PC-9 (cell line): ENCODE measurements at regions of chr11 and their contacts with region 1.

Region 1: DNA sequence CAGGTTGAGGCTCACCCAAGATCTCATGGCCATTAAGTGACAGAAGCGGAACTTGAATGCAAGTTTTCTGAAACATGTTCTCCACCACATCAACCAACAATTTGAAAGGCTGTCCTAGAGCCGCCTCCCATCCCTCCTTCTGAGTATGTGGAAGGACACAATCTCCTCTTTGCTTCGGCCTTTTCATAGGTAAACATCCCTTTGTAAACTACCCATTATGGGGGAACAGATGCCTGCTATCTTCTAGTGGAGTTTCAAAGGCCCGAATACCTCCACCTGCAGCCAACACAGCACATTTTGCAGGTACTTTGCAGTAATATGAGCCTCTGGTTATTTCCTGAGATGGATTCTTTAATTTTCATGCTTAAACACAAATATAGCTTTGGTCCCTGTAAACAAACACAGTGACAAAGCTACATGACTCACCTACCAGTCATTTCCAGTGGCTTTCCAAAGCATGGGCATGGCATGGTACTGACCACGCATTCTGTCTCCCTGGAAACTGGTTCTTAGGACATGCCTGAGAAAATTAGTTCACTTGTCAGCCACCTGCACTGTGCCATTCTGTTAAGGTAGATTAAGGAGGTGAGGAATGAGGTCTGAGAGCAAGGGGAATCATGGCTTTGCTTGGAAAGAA is 60.1 kb downstream of the EHF start:
- DNase-seq: peak; percentile 85 to 99
- H3K4me3 ChIP-seq: no peak overlapping the region
- H3K27ac ChIP-seq: peak overlapping the region; percentile 86
- H3K4me1 ChIP-seq: peaks cover 60% of the 10 kb centered on the region
- H3K27me3 ChIP-seq: no peaks in the 10 kb centered on the region
- CTCF ChIP-seq: no peak

Region 2: DNA sequence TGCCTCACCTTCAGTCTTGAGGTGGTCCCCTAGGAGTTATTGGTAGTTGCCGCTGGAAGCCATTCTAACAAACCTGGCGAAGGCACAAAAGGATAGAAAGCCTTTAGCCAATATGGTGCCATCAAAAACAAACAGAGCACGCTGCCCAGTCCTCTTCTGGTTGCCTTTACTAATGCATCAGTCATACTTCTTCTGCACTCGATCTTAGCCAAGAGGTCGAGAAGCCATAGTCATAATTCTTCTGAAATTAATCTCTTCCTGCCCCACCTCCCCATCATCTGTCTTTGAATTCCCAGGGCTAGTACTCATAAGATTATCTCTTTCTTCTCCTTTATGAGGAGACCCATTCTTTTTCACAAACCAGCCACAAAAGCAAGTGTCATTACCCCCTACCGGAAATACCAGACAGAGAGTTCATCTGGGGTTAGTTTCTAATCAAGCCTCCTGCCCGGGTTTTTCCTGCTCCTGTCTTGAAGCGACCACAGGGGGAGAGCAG is 81.6 kb before region 1 on chr11:
- CTCF ChIA-PET with region 1: no interaction called
- POLR2A ChIA-PET with region 1: no interaction called
- intact Hi-C with region 1: loop called (anchors 1 kb)
- DNase-seq: peak; percentile 66 to 98
- H3K4me3 ChIP-seq: peak overlapping the region; percentile 24; the same call in 1 of the 2 replicates
- H3K27ac ChIP-seq: peak overlapping the region; percentile 91
- H3K4me1 ChIP-seq: peaks cover 45% of the 10 kb centered on the region
- H3K27me3 ChIP-seq: no peaks in the 10 kb centered on the region
- CTCF ChIP-seq: no peak

Region 3: DNA sequence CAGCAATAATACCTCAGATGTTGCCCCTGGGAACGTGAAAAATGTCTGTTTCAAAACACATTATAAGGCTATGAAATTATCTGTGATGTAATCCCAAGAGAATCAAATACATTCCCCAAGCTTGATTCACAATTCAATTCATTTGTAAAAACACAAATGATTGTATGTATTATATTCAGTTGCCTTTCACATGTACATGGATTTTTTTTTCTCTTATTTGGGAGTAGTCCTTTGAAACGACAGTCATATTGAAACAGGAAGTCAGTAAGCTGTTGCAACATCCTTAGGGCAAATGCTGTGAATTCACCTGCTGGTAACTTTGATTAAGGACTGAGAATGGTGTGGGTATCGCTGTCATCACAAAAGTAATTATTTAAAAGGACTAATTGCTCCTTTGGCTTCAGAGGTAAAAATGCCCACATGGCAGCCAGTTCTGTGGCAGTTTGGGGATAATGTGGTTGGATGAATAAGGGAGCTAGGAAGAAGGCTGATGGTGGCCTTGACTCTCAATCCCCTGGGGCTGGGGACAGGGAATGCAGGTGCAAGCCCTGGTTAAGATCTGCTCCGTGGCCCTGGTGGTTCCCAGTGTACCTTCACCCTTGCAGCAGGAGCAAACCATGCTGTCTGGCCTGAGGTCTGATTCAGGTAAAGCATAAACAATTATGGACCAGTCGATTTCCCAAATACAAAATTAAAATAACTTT is 46.9 kb before region 1 on chr11:
- CTCF ChIA-PET with region 1: no interaction called
- POLR2A ChIA-PET with region 1: no interaction called
- intact Hi-C with region 1: loop called (anchors 2 kb)
- DNase-seq: peak in 1 of 2 experiments; percentile 90
- H3K4me3 ChIP-seq: peak overlapping the region; percentile 45
- H3K27ac ChIP-seq: peak overlapping the region; percentile 91
- H3K4me1 ChIP-seq: peaks cover 100% of the 10 kb centered on the region
- H3K27me3 ChIP-seq: no peaks in the 10 kb centered on the region
- CTCF ChIP-seq: peak; percentile 41; the same call in 1 of the 2 replicates

Region 4: DNA sequence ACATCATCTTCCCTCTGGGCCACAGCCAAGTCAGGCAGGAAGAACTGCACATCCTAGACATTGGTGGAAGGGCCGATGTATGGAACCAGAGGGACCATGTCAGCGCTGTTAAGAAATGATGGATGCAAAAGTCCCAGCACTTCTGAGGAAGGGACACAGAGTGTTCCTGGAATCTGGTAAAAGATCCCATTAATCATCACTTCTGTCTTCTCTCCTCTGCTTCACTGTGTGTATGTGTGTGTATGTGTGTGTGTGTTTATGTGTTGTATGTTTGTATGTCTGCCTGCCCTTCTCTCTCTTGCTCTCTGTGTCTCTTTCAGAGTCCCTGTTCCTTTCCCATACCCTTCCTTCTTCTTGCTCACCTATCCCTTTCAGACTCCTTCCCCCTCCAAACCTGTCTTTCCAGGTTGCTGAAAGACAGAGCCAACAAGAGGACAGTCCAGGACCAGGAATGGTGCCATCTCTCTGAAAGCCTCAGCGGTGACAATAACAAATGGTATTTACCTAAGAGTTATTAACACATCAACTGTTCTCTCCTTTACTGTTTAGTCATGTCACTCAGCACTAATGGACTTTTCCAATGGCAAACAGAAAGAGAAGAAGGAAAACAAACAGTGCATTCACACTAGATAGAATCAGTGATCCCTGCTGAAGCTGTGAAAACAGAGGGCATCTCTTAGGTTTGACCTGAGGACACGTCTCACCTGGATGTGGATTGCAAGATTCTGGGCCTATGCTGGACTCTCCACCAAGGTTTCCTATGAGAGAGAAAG is 13.0 kb before region 1 on chr11:
- CTCF ChIA-PET with region 1: no interaction called
- POLR2A ChIA-PET with region 1: no interaction called
- intact Hi-C with region 1: loop called (anchors 1 kb)
- DNase-seq: peak; percentile 78 to 99
- H3K4me3 ChIP-seq: no peak overlapping the region
- H3K27ac ChIP-seq: peak overlapping the region; percentile 85
- H3K4me1 ChIP-seq: peaks cover 50% of the 10 kb centered on the region
- H3K27me3 ChIP-seq: no peaks in the 10 kb centered on the region
- CTCF ChIP-seq: no peak

Region 5: DNA sequence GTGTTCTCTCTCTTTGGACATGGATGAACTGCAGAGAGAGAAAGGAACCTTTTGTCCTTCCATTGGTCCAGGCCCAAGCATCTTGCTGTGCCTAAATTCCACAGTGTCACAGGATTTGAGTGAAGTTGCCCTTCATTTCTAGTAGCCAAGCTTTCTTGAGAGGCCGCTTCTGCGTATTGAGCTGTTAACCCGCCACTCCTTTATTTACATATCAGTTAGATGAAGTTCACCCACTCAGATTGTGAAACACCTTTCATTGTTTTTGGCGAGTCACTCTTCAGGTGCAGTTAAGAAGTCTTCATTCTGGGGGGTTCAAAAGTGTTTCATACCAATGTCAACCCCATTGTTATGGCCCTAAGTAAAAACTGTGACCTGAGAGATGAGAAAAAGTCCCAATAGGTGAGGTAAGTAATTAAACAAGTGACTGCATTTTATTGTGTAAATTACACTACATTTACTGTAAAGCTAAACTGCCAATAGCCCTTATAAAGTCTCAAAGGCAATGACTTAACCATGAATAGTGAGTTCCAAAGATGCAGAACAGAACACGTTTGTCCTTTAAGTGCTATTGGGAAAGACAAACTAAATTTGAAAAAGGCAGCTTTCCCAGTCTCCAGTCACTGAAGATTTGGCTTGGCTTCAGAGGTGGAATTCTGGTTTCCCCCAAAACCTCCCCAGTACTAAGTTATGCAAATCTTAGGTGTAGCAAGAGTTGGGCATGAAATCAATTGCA is 174.2 kb after region 1 on chr11:
- CTCF ChIA-PET with region 1: no interaction called
- POLR2A ChIA-PET with region 1: no interaction called
- intact Hi-C with region 1: no loop called
- DNase-seq: peak in 1 of 2 experiments; percentile 50
- H3K4me3 ChIP-seq: no peak overlapping the region
- H3K27ac ChIP-seq: 0 out of 2 replicates have a peak overlapping the region, but pooled peaks have one; percentile 16
- H3K4me1 ChIP-seq: peaks cover 10% of the 10 kb centered on the region
- H3K27me3 ChIP-seq: no peaks in the 10 kb centered on the region
- CTCF ChIP-seq: no peak